HCT116 (cell line): ENCODE measurements at regions of chr9 and their contacts with region 1.

Region 1: DNA sequence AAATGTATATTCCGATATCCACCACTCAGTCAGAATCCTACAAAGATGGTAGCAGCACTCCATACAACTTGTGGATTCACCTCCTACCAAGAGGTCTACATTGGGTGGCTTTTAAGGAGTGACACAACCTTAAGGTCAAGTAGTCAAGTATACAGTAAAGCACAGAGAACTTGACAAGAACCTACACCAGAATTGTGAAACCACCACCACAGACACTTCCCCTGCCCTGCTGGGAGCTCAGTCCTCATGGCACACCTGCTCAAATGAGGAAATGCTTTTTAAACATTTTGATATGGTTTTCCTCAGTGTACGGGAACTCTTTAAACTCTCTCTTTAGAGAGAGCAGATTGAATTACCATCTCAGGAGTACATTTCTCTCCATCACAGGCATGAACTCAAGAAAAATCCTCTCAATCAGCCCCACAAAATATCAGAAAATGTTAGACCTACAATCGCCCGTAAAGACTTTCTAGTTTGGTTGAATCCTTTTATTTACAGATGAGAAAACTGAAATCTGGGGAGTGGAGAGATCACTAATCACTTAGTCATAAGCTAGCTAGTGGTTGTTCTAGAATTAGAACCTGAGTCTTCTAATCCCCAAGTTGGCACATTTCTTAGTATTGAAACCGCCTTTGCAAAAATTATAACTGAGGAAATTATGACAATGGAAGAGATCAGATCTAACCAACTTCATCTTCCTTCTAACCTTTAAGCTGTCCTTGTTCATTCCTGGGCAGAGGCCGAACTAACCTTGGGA is 38.5 kb upstream of the NR4A3 start:
- DNase-seq: no peak
- ATAC-seq: no peak
- H3K4me3 ChIP-seq: no peak overlapping the region
- H3K27ac ChIP-seq: no peak overlapping the region
- H3K4me1 ChIP-seq: peaks cover 0 to 8% of the 10 kb centered on the region in 2 experiments; a peak in 2 of 4 replicates
- H3K27me3 ChIP-seq: no peaks in the 10 kb centered on the region
- CTCF ChIP-seq: no peak
- POLR2A ChIP-seq: no peak
- RAD21 ChIP-seq: no peak

Region 2: GRCh38 chr9:99433555-99433954 is 349.6 kb before region 1 on chr9:
- CTCF ChIA-PET with region 1: no interaction called
- POLR2A ChIA-PET with region 1: no interaction called
- RAD21 ChIA-PET with region 1: no interaction called
- intact Hi-C with region 1: loop called (anchors 10 kb)
- DNase-seq: peak; percentile 60
- ATAC-seq: peak; percentile 97
- H3K4me3 ChIP-seq: no peak overlapping the region
- H3K27ac ChIP-seq: peak overlapping the region; percentile 42; the same call in 1 of the 2 replicates
- H3K4me1 ChIP-seq: peaks cover 19 to 24% of the 10 kb centered on the region in 2 experiments
- H3K27me3 ChIP-seq: no peaks in the 10 kb centered on the region
- CTCF ChIP-seq: no peak
- POLR2A ChIP-seq: no peak
- RAD21 ChIP-seq: no peak

Region 3: GRCh38 chr9:99752417-99753109 is 30.6 kb before region 1 on chr9:
- CTCF ChIA-PET with region 1: no interaction called
- POLR2A ChIA-PET with region 1: no interaction called
- RAD21 ChIA-PET with region 1: no interaction called
- intact Hi-C with region 1: no loop called
- DNase-seq: no peak
- ATAC-seq: no peak
- H3K4me3 ChIP-seq: no peak overlapping the region
- H3K27ac ChIP-seq: no peak overlapping the region
- H3K4me1 ChIP-seq: peaks cover 0 to 7% of the 10 kb centered on the region in 2 experiments; a peak in 3 of 4 replicates
- H3K27me3 ChIP-seq: no peaks in the 10 kb centered on the region
- CTCF ChIP-seq: no peak
- POLR2A ChIP-seq: no peak
- RAD21 ChIP-seq: no peak